ENCODE measurements at regions of chr10 and their contacts with region 1.

Region 1: DNA sequence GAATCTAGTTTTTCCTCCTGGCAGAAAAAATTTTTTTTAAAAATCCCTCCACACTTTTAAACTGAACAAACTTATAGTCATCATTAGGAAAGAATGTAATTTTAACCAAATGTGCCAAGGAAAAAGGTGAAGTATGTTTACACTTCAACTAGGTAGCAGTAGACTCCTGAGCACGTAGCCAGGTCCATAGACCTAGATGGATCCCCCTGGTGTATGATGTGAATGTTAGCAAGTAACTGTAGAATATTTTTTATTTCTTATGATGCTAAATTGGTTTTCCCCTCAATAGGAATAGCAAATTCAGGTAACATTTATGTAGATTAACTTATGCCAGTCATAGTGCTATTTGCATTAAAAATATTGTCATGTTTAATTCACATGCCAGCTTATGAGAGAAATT is 19.6 kb downstream of the CABCOCO1 start:
- DNase-seq: no peak
- ATAC-seq: no peak
- H3K4me3 ChIP-seq: no peak overlapping the region
- H3K27ac ChIP-seq: no peak overlapping the region
- H3K4me1 ChIP-seq: no peaks in the 10 kb centered on the region
- H3K27me3 ChIP-seq: no peaks in the 10 kb centered on the region
- CTCF ChIP-seq: peak in 1 of 9 donors; percentile 15

Region 2: GRCh38 chr10:61554925-61555324 is 127.4 kb before region 1 on chr10:
- intact Hi-C with region 1: loop called in 1 of 10 experiments (anchors 5 kb)
- DNase-seq: no peak
- ATAC-seq: no peak
- H3K4me3 ChIP-seq: no peak overlapping the region
- H3K27ac ChIP-seq: no peak overlapping the region
- H3K4me1 ChIP-seq: no peaks in the 10 kb centered on the region
- H3K27me3 ChIP-seq: no peaks in the 10 kb centered on the region
- CTCF ChIP-seq: no peak

Region 3: DNA sequence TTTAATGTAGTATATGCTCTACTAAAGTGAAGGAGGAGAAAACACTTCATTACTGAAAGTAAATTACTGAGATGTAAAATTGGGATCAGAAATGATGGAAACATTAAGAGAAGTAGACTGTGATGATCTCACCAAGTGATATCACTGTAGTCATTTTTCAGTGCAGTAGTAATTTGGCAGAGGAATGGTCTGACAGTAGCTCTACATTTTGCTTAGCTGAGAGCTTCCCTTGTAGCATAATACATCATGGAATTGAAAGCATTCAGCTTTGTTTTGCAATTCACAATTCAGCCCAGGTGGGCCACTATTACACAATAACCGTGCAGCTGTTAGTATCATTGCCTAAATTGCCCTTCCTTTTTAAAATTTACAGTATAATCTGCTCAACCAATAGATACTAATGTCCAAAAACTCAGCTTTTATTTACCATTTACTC is 39.0 kb before region 1 on chr10:
- intact Hi-C with region 1: no loop called
- DNase-seq: no peak
- ATAC-seq: peak in 7 of 8 donors; percentile 38 to 63 (median 54)
- H3K4me3 ChIP-seq: no peak overlapping the region
- H3K27ac ChIP-seq: peak overlapping the region in 2 of 10 donors; percentile 13
- H3K4me1 ChIP-seq: peaks cover 0 to 17% (median 4%) of the 10 kb centered on the region in 9 donors
- H3K27me3 ChIP-seq: no peaks in the 10 kb centered on the region
- CTCF ChIP-seq: no peak

Region 4: GRCh38 chr10:61786728-61787127 is 104.4 kb after region 1 on chr10:
- intact Hi-C with region 1: no loop called
- DNase-seq: no peak
- ATAC-seq: no peak
- H3K4me3 ChIP-seq: no peak overlapping the region
- H3K27ac ChIP-seq: no peak overlapping the region
- H3K4me1 ChIP-seq: peaks cover 0 to 15% (median 0%) of the 10 kb centered on the region in 9 donors
- H3K27me3 ChIP-seq: no peaks in the 10 kb centered on the region
- CTCF ChIP-seq: no peak

Measured in heart right ventricle (tissue), 16 donors.